Tibial artery (tissue), 4 donors: ENCODE measurements at regions of chr2 and their contacts with region 1.

Region 1: GRCh38 chr2:85797921-85798320 is 44.1 kb downstream of the ATOH8 start:
- DNase-seq: peak in 1 of 2 donors; percentile 16
- H3K4me3 ChIP-seq: no peak overlapping the region
- H3K27ac ChIP-seq: peak overlapping the region; percentile 69 to 85
- H3K4me1 ChIP-seq: peaks cover 0 to 50% (median 45%) of the 10 kb centered on the region in 4 donors
- H3K27me3 ChIP-seq: no peaks in the 10 kb centered on the region
- CTCF ChIP-seq: peak; percentile 27 to 31

Region 2: DNA sequence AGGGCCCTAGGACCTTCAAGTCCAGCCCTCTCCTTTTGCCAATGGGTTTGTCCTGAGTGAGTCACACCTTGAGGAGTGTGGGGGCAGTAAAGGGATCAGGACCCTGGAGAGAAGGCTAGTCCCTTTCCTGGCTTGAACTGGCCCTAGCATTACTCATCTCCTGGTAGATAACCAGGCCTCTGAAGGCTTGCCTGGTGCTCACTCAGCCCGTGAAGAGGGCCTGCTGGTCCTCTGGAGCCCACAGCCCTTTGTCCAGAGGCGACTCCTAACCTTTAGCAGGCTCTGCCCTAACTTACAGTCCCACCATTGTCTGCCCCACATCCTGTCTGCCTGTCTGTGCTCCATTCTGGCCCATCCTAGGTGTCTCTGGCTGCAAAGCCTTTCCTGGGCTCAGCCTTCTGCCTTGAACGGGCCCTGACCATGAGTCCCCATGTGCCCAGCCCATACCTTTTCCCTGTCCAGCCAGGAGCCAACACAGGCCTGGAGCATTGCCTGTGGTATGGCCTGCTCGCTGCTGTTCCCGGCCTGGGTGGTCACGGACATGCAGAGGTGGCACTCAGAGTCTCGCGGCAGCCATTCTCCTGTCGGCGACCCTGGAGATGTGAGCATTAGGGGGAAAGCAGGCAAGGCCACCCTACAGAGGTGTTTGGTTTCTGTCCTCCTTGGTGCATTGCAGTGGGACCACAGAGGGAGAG is 134.9 kb before region 1 on chr2:
- intact Hi-C with region 1: no loop called
- DNase-seq: peak; percentile 73 to 79
- H3K4me3 ChIP-seq: no peak overlapping the region
- H3K27ac ChIP-seq: no peak overlapping the region
- H3K4me1 ChIP-seq: peaks cover 0 to 17% (median 7%) of the 10 kb centered on the region in 4 donors
- H3K27me3 ChIP-seq: no peaks in the 10 kb centered on the region
- CTCF ChIP-seq: no peak

Region 3: GRCh38 chr2:85741833-85742455 is 56.0 kb before region 1 on chr2:
- intact Hi-C with region 1: loop called (anchors 10 kb)
- DNase-seq: peak; percentile 93 to 97
- H3K4me3 ChIP-seq: peak overlapping the region in 1 of 2 donors; percentile 27
- H3K27ac ChIP-seq: peak overlapping the region; percentile 96 to 97
- H3K4me1 ChIP-seq: peaks cover 13 to 90% (median 74%) of the 10 kb centered on the region in 4 donors
- H3K27me3 ChIP-seq: no peaks in the 10 kb centered on the region
- CTCF ChIP-seq: peak in 1 of 2 experiments; percentile 7

Region 4: DNA sequence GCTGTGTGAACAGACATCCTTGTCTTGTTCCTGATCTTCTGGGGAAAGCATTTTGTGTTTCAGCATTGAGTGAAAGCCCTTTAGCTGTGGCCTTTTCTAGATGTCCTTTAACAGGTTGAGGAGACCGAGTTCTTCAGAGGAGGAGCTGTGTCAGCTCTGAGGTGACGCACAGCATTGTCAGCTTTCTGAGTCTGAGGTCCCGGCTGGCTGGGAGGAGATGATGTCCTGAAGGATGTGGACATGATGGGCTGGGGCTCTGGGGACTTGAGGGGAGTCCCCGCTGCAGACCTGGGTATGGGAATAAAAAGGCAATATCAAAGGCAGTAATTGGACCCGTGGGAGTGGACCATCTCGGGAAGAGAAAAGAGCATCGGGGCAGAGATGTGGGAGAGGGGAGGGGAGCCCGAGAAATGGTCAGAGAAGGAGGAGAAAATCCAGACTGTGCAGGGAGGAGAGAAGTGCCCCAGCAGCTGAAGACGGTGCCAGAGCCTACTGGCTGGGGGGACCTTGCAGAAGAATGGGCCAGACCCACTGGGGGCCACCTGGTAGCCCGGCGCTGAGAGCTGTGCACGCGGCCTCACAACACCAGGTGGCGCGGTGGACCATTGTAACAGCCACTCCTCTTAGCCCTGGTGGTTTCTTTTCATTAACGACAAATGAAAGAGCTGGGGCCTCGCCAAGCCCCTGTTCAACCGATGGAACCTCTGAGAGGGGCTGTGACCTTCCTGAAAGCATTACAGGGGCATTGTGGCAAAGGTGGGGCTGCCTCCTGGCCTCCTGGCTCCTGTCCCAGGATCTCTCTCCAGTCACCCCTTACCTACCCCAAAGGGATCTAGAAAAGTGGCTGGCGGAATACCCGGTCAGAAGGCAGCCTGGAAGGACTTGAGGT is 29.3 kb after region 1 on chr2:
- intact Hi-C with region 1: no loop called
- DNase-seq: peak; percentile 77 to 82
- H3K4me3 ChIP-seq: no peak overlapping the region
- H3K27ac ChIP-seq: no peak overlapping the region
- H3K4me1 ChIP-seq: peaks cover 0 to 9% (median 7%) of the 10 kb centered on the region in 4 donors
- H3K27me3 ChIP-seq: no peaks in the 10 kb centered on the region
- CTCF ChIP-seq: peak; percentile 91 to 96

Region 5: GRCh38 chr2:85843543-85843942 is 45.6 kb after region 1 on chr2:
- intact Hi-C with region 1: no loop called
- DNase-seq: no peak
- H3K4me3 ChIP-seq: no peak overlapping the region
- H3K27ac ChIP-seq: no peak overlapping the region
- H3K4me1 ChIP-seq: no peaks in the 10 kb centered on the region
- H3K27me3 ChIP-seq: no peaks in the 10 kb centered on the region
- CTCF ChIP-seq: peak in 1 of 2 experiments; percentile 15